Naive thymus-derived CD4-positive, alpha-beta T cell (primary cell): ENCODE measurements at regions of chr3 and their contacts with region 1.

Region 1: GRCh38 chr3:60081381-60082095 is 1031.7 kb upstream of the CFAP20DC start:
- DNase-seq: peak in 7 of 9 donors; percentile 27 to 70 (median 62)
- ATAC-seq: peak; percentile 46
- H3K4me3 ChIP-seq: peak overlapping the region; percentile 54
- H3K4me3 Mint-ChIP-seq: peak overlapping the region; percentile 76 to 97 (median 92)
- H3K27ac ChIP-seq: peak overlapping the region; percentile 86
- H3K27ac Mint-ChIP-seq: peak overlapping the region; percentile 89 to 98 (median 94)
- H3K4me1 ChIP-seq: peaks cover 21 to 23% of the 10 kb centered on the region in 2 donors
- H3K4me1 Mint-ChIP-seq: peaks cover 17 to 64% (median 53%) of the 10 kb centered on the region in 7 donors
- H3K27me3 ChIP-seq: no peaks in the 10 kb centered on the region
- H3K27me3 Mint-ChIP-seq: no peaks in the 10 kb centered on the region

Region 2: DNA sequence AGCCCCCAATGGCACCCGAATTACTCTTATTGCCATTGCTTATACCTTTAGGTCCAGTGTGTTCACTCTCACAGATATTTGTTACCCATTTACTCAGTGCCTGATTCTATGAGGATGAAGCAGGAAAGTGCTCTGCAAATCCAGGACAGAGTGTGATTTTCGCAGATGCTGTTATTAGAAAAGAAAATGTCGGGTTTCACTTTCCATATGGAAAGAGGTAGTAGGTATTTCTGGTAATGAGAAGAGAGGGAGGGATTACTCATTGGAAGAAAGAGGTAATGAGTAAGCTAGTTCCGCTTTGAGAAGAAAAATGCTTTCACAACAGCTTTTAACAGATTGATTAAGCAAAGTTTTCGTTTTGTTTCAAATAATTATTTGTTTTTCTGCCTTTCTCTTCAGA is 695.4 kb before region 1 on chr3:
- CTCF ChIA-PET with region 1: no interaction called
- POLR2A ChIA-PET with region 1: no interaction called
- intact Hi-C with region 1: loop called in 1 of 2 experiments (anchors 10 kb)
- DNase-seq: no peak
- ATAC-seq: peak; percentile 60
- H3K4me3 ChIP-seq: no peak overlapping the region
- H3K4me3 Mint-ChIP-seq: peak overlapping the region in 2 of 10 donors; percentile 4 to 58
- H3K27ac ChIP-seq: no peak overlapping the region
- H3K27ac Mint-ChIP-seq: peak overlapping the region in 1 of 9 donors; percentile 88
- H3K4me1 ChIP-seq: no peaks in the 10 kb centered on the region
- H3K4me1 Mint-ChIP-seq: peaks cover 3 to 80% (median 38%) of the 10 kb centered on the region in 7 donors
- H3K27me3 ChIP-seq: no peaks in the 10 kb centered on the region
- H3K27me3 Mint-ChIP-seq: no peaks in the 10 kb centered on the region

Region 3: DNA sequence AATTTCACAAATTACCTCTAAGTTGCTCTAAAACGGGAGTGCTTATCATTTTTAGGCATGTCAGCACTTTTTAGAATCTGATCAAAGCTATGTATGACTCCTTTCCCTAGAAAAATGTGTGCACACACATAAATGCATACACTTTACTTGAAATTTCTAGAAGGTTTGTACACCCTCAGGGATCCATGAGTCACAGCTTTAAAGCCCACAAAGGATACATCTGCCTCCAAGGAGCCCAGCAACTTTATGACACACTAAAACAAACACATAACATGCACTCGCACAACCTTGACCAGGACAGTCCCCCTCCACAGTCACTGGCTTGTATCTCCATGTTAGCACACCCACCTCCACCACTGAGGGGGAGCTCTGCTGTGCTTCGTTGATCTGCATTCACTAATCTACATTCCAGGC is 309.8 kb before region 1 on chr3:
- CTCF ChIA-PET with region 1: no interaction called
- POLR2A ChIA-PET with region 1: no interaction called
- intact Hi-C with region 1: loop called (anchors 2 to 5 kb)
- DNase-seq: no peak
- ATAC-seq: no peak
- H3K4me3 ChIP-seq: no peak overlapping the region
- H3K4me3 Mint-ChIP-seq: peak overlapping the region in 5 of 10 donors; percentile 67 to 79 (median 73)
- H3K27ac ChIP-seq: no peak overlapping the region
- H3K27ac Mint-ChIP-seq: peak overlapping the region in 4 of 9 donors; percentile 28 to 65 (median 53)
- H3K4me1 ChIP-seq: peaks cover 19 to 42% of the 10 kb centered on the region in 2 donors
- H3K4me1 Mint-ChIP-seq: peaks cover 37 to 86% (median 74%) of the 10 kb centered on the region in 7 donors
- H3K27me3 ChIP-seq: no peaks in the 10 kb centered on the region
- H3K27me3 Mint-ChIP-seq: no peaks in the 10 kb centered on the region

Region 4: DNA sequence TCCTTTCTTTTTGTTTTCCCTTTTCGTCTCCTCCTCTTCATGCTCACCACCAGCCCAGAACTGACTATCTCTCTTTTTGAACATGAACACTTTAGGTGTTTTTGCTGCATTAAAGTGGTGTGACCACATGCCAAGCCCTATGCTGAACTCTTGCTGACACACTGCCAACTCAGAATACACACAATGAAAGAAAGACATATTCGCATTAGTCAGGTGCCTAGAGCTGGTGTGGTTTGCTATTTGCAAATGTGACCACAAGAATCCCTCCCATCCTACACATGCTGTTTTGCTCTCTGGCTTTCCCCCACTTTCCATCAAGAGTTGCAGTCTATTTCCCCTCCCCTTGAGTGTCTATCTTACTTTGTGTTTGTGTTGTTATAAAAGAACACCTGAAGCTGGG is 63.9 kb before region 1 on chr3:
- CTCF ChIA-PET with region 1: interaction called, 4 read pairs
- POLR2A ChIA-PET with region 1: interaction called, 295 read pairs
- intact Hi-C with region 1: loop called (anchors 1 kb)
- DNase-seq: peak in 8 of 9 donors; percentile 58 to 88 (median 76)
- ATAC-seq: peak; percentile 92
- H3K4me3 ChIP-seq: peak overlapping the region; percentile 15
- H3K4me3 Mint-ChIP-seq: peak overlapping the region; percentile 53 to 88 (median 74)
- H3K27ac ChIP-seq: peak overlapping the region; percentile 66
- H3K27ac Mint-ChIP-seq: peak overlapping the region; percentile 91 to 99 (median 94)
- H3K4me1 ChIP-seq: peaks cover 37 to 60% of the 10 kb centered on the region in 2 donors
- H3K4me1 Mint-ChIP-seq: peaks cover 29 to 100% (median 88%) of the 10 kb centered on the region in 7 donors
- H3K27me3 ChIP-seq: no peaks in the 10 kb centered on the region
- H3K27me3 Mint-ChIP-seq: no peaks in the 10 kb centered on the region

Region 5: DNA sequence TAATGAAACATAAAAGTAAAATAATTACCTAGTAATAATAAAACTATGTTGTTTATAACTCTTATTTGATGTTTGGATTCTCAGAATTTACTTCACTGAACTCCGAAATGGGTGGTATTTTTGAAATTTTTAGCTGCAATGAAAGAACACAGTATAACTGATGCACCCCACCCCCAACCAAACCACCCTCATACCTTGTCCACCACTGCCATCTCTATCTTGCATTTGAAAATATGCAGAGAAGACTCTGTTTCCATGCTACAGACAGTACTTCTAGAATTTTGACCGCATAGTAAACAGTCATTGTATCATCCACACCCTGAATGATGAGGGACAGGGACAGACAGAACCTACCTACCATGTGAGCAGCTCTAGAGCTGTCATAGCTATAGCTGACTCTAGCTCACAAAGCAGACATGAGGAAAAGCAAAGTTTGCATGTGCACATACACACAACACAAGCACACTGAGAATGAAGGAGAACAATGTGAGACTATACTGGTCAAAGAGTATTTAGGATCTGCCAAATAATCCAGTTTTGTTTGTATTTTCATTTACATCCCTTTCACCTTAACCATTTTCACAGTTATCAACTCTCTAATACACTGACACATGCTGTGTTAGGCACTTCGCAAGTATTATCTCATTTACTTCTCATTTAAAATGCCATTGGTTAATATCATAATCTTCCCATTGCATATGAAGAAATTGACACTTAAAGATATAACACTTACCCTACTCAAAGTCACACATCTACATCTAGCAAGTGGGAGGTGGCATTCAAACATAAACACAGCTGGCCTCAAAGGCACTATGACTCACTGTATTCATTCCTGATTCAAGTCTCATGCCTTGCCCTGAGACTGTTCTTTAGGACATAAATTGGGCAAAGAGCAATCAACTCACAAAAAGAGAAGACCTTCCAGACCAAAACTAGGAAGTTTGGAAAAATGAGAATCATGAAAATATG is 17.0 kb before region 1 on chr3:
- CTCF ChIA-PET with region 1: interaction called, 5 read pairs
- POLR2A ChIA-PET with region 1: interaction called, 213 read pairs
- intact Hi-C with region 1: loop called (anchors 1 to 2 kb)
- DNase-seq: peak in 3 of 9 donors; percentile 48 to 52 (median 48)
- ATAC-seq: peak; percentile 77
- H3K4me3 ChIP-seq: peak overlapping the region; percentile 25
- H3K4me3 Mint-ChIP-seq: peak overlapping the region; percentile 5 to 81 (median 74)
- H3K27ac ChIP-seq: peak overlapping the region; percentile 71
- H3K27ac Mint-ChIP-seq: peak overlapping the region; percentile 88 to 99 (median 96)
- H3K4me1 ChIP-seq: peaks cover 17 to 68% of the 10 kb centered on the region in 2 donors
- H3K4me1 Mint-ChIP-seq: peaks cover 28 to 96% (median 87%) of the 10 kb centered on the region in 7 donors
- H3K27me3 ChIP-seq: no peaks in the 10 kb centered on the region
- H3K27me3 Mint-ChIP-seq: no peaks in the 10 kb centered on the region

Region 6: GRCh38 chr3:60431599-60431958 is 350.0 kb after region 1 on chr3:
- CTCF ChIA-PET with region 1: interaction called, 5 read pairs
- POLR2A ChIA-PET with region 1: interaction called, 3 read pairs
- intact Hi-C with region 1: loop called in 1 of 2 experiments (anchors 1 kb)
- DNase-seq: peak in 4 of 9 donors; percentile 13 to 23 (median 19)
- ATAC-seq: peak; percentile 38
- H3K4me3 ChIP-seq: no peak overlapping the region
- H3K4me3 Mint-ChIP-seq: peak overlapping the region in 4 of 10 donors; percentile 22 to 59 (median 46)
- H3K27ac ChIP-seq: no peak overlapping the region
- H3K27ac Mint-ChIP-seq: peak overlapping the region in 2 of 9 donors; percentile 21 to 60
- H3K4me1 ChIP-seq: no peaks in the 10 kb centered on the region
- H3K4me1 Mint-ChIP-seq: peaks cover 0 to 34% (median 27%) of the 10 kb centered on the region in 7 donors
- H3K27me3 ChIP-seq: peaks cover 0 to 5% of the 10 kb centered on the region in 2 donors
- H3K27me3 Mint-ChIP-seq: no peaks in the 10 kb centered on the region